ENCODE measurements at regions of chr16 and their contacts with region 1.

Region 1: DNA sequence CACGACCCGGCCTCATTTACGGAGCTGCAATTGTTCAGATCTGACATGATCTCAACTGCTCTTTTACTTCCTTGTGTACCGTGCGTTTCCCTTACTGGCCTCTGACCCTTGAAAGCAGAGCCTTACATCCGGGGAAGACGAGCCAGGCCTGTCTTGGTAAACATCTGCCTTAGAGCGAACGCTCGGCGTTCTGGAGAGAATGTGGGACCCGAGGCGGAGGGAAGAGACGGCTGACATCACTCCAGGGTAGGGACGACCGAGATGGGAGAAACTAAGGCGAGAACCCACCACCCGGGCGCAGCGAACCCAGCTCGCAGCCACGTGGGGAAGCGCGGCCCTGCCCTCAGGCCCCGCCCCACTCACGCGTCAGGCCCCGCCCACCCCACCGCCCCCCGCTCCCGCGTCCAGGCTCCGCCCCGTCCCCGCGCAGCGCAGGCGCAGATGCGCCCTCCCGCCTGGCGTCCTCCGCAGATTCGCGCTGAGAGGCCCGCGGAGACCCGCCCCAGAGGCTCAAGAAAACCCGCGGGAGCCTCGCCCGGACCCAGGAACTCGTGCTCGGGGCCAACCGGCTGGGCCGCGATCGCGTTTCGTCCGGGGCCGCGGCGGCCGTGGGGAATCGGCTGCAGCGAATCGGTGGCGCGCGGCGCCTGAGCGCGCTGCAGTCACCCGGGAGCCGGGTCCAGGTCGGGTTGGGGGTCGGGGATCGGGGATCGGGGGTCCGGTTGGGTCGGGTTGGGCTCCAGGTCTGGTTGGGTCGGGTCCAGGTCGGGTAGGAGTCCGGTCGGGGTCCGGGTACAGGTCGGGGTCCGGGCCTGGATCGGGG is at the start of gene TELO2:
- DNase-seq: peak; percentile 79 to 95 (median 88)
- ATAC-seq: peak; percentile 87
- H3K4me3 ChIP-seq: peak within 1 kb of the TSS; percentile 86
- H3K4me3 Mint-ChIP-seq: peak within 1 kb of the TSS; percentile 95
- H3K27ac ChIP-seq: peak within 1 kb of the TSS; percentile 84
- H3K27ac Mint-ChIP-seq: peak within 1 kb of the TSS; percentile 97
- H3K4me1 ChIP-seq: peaks cover 27% of the 10 kb centered on the region
- H3K4me1 Mint-ChIP-seq: peaks cover 10% of the 10 kb centered on the region
- H3K27me3 ChIP-seq: no peaks in the 10 kb centered on the region
- H3K27me3 Mint-ChIP-seq: no peaks in the 10 kb centered on the region
- CTCF ChIP-seq: peak; percentile 19
- total RNA-seq, gene TELO2: 29.7 to 30.8 TPM

Region 2: GRCh38 chr16:1408171-1408837 is 84.8 kb before region 1 on chr16:
- CTCF ChIA-PET with region 1: no interaction called
- POLR2A ChIA-PET with region 1: interaction called, 3 read pairs
- intact Hi-C with region 1: loop called in 1 of 2 experiments (anchors 5 kb)
- DNase-seq: peak; percentile 89 to 99 (median 96)
- ATAC-seq: peak; percentile 92
- H3K4me3 ChIP-seq: peak overlapping the region; percentile 51
- H3K4me3 Mint-ChIP-seq: peak overlapping the region; percentile 68
- H3K27ac ChIP-seq: peak overlapping the region in 1 of 2 donors; percentile 29
- H3K27ac Mint-ChIP-seq: peak overlapping the region; percentile 71
- H3K4me1 ChIP-seq: peaks cover 24% of the 10 kb centered on the region
- H3K4me1 Mint-ChIP-seq: peaks cover 34% of the 10 kb centered on the region
- H3K27me3 ChIP-seq: no peaks in the 10 kb centered on the region
- H3K27me3 Mint-ChIP-seq: no peaks in the 10 kb centered on the region
- CTCF ChIP-seq: no peak

Region 3: GRCh38 chr16:1474796-1475551 is 18.2 kb before region 1 on chr16 and contains the start of gene CLCN7:
- CTCF ChIA-PET with region 1: no interaction called
- POLR2A ChIA-PET with region 1: interaction called, 4 read pairs
- intact Hi-C with region 1: loop called (anchors 1 to 2 kb)
- DNase-seq: peak; percentile 70 to 94 (median 84)
- ATAC-seq: peak; percentile 87
- H3K4me3 ChIP-seq: peak within 1 kb of the TSS; percentile 62
- H3K4me3 Mint-ChIP-seq: peak within 1 kb of the TSS; percentile 88
- H3K27ac ChIP-seq: peak within 1 kb of the TSS; percentile 72 to 84
- H3K27ac Mint-ChIP-seq: peak within 1 kb of the TSS; percentile 89
- H3K4me1 ChIP-seq: peaks cover 41% of the 10 kb centered on the region
- H3K4me1 Mint-ChIP-seq: peaks cover 43% of the 10 kb centered on the region
- H3K27me3 ChIP-seq: no peaks in the 10 kb centered on the region
- H3K27me3 Mint-ChIP-seq: no peaks in the 10 kb centered on the region
- CTCF ChIP-seq: no peak
- total RNA-seq, gene CLCN7: 70.5 to 76.2 TPM

Region 4: DNA sequence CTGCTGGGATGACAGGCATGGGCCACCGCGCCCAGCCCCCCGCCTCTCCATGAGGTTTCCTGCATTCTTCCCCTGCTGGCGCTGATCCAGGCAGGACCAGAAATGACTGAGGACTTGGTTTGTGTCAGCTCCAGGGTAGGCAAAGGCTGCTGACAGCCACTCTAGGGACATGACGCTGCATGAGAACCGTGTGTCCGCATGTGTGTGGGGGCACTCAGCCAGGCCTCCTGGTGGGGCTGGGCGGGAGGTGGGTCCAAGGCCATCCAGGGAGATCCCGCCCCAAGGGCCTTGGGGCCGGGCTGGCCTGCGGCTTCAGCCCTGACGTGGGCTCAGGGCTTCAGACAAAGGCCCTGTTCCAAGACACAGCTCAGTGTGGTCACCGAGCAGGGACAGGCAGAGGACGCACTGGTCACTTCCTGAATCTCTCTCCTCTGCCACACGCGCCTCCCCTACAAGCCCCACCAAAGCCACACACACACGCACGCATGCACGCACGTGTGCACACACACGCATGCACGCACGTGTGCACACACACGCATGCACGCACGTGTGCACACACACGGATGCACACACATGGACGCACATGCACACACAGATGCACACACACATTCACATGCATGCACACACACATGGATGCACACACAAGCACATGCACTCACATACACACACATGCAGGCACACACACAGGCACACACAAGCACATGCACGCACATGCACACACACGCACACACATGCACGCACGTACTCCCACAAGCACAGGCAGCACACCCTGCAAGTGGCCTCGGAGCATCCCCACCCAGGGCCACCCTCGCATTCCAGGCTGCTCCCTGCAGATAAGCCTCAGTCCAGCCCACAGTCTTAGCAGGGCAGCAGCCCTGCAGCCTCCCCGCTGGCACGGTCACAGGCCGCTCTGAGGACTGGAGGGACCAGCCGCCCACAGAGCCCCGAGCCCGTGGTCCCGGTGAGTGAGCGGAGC is 35.0 kb after region 1 on chr16:
- CTCF ChIA-PET with region 1: no interaction called
- POLR2A ChIA-PET with region 1: interaction called, 27 read pairs
- intact Hi-C with region 1: loop called in 1 of 2 experiments (anchors 5 kb)
- DNase-seq: no peak
- ATAC-seq: no peak
- H3K4me3 ChIP-seq: no peak overlapping the region
- H3K4me3 Mint-ChIP-seq: no peak overlapping the region
- H3K27ac ChIP-seq: peak overlapping the region; percentile 48 to 71
- H3K27ac Mint-ChIP-seq: peak overlapping the region; percentile 80
- H3K4me1 ChIP-seq: peaks cover 67% of the 10 kb centered on the region
- H3K4me1 Mint-ChIP-seq: peaks cover 47% of the 10 kb centered on the region
- H3K27me3 ChIP-seq: no peaks in the 10 kb centered on the region
- H3K27me3 Mint-ChIP-seq: no peaks in the 10 kb centered on the region
- CTCF ChIP-seq: no peak

Region 5: DNA sequence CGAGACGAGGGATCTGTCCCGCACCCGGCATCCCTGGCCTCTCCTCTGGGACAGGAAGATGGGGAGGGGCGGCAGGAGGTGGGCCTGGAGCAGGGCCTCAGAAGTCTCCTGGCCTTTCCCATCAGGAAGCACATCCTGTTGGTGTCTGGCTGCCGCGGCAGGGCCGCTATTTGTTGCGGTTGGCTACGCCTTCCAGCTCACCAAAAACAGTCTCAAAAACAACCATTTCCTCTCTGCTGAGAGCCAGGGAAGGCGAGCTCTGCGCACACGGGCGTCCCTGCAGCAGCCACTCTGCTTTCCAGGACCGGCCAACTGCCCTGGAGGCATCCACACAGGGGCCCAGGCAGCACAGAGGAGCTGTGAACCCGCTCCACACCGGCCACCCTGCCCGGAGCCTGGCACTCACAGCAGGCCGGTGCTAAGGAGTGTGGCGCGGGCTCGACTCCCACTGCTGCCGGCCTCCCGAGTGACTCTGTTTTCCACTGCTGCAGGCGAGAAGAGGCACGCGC is 40.4 kb after region 1 on chr16 and contains the start of gene TMEM204:
- CTCF ChIA-PET with region 1: no interaction called
- POLR2A ChIA-PET with region 1: interaction called, 27 read pairs
- intact Hi-C with region 1: loop called (anchors 2 to 5 kb)
- DNase-seq: peak in 13 of 14 experiments; percentile 40 to 75 (median 58)
- ATAC-seq: peak; percentile 47
- H3K4me3 ChIP-seq: peak within 1 kb of the TSS; percentile 98
- H3K4me3 Mint-ChIP-seq: peak within 1 kb of the TSS; percentile 99
- H3K27ac ChIP-seq: peak within 1 kb of the TSS; percentile 55 to 56
- H3K27ac Mint-ChIP-seq: peak within 1 kb of the TSS; percentile 98
- H3K4me1 ChIP-seq: peaks cover 64% of the 10 kb centered on the region
- H3K4me1 Mint-ChIP-seq: peaks cover 59% of the 10 kb centered on the region
- H3K27me3 ChIP-seq: no peaks in the 10 kb centered on the region
- H3K27me3 Mint-ChIP-seq: no peaks in the 10 kb centered on the region
- CTCF ChIP-seq: no peak
- total RNA-seq, gene TMEM204: 20.5 to 22.1 TPM

Region 6: DNA sequence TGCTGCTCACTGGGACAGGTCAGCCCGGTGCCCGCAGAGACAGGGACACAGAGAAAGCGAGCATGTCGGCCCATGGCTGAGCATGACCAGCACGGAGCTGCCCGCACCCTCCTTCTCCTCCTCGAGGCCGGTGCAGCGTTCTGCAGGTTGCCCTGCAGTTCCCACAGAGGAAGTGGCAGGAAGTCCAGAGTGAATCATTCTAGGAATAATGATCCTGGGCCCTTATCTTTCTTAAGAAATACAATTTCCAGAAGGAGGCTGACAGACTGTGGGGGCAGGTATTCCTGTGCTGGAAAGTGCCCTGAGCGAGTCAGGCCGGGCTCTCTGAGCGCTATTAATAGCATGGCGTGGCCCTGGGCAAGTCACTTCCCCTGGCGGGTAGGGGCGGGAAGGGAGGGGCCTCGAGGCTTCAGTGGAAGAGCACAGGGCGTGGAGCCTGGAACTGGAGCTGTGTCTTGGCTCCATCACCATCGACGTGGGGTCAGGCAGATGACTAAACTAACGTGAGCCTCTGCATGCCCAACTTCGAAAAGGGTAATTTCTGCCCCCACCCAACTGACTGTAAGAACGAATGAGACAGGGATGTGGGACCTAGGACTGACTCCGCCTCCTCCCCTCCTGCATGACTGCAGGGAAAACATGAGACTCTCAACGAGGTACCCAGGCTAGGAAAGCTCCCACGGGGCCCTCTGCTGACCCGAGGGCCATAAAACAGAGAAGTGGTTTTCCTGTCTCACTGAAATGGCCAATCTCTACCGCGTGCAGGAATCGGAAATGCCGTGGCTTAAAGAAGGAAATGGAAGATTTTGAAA is 50.2 kb after region 1 on chr16:
- CTCF ChIA-PET with region 1: no interaction called
- POLR2A ChIA-PET with region 1: interaction called, 18 read pairs
- intact Hi-C with region 1: no loop called
- DNase-seq: peak in 9 of 14 experiments; percentile 24 to 76 (median 45)
- ATAC-seq: peak; percentile 66
- H3K4me3 ChIP-seq: peak overlapping the region; percentile 10
- H3K4me3 Mint-ChIP-seq: peak overlapping the region; percentile 54
- H3K27ac ChIP-seq: peak overlapping the region; percentile 56 to 58
- H3K27ac Mint-ChIP-seq: peak overlapping the region; percentile 80
- H3K4me1 ChIP-seq: peaks cover 99% of the 10 kb centered on the region
- H3K4me1 Mint-ChIP-seq: peaks cover 81% of the 10 kb centered on the region
- H3K27me3 ChIP-seq: no peaks in the 10 kb centered on the region
- H3K27me3 Mint-ChIP-seq: no peaks in the 10 kb centered on the region
- CTCF ChIP-seq: no peak

Region 7: DNA sequence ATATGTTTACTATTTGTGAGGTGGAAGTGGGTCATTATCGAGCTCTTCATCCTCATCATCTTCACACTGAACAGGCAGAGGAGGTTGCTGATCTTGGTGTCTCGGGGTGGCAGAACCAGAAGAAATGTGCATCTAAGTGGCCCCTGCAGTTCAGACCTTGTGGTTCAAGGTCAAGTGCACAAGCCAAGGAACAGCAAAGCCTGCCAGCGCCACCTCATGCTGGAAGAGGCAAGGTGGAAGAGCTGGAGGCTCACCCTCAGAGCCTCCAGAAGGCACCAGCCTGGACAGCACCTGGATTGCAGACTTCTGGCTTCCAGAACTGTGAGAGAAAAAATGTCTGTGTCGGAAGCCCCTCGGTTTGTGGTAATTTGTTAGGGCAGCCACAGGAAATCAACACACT is 86.1 kb after region 1 on chr16:
- CTCF ChIA-PET with region 1: no interaction called
- POLR2A ChIA-PET with region 1: no interaction called
- intact Hi-C with region 1: no loop called
- DNase-seq: peak in 4 of 14 experiments; percentile 23 to 47 (median 30)
- ATAC-seq: no peak
- H3K4me3 ChIP-seq: no peak overlapping the region
- H3K4me3 Mint-ChIP-seq: no peak overlapping the region
- H3K27ac ChIP-seq: no peak overlapping the region
- H3K27ac Mint-ChIP-seq: no peak overlapping the region
- H3K4me1 ChIP-seq: no peaks in the 10 kb centered on the region
- H3K4me1 Mint-ChIP-seq: no peaks in the 10 kb centered on the region
- H3K27me3 ChIP-seq: no peaks in the 10 kb centered on the region
- H3K27me3 Mint-ChIP-seq: no peaks in the 10 kb centered on the region
- CTCF ChIP-seq: no peak

Region 8: DNA sequence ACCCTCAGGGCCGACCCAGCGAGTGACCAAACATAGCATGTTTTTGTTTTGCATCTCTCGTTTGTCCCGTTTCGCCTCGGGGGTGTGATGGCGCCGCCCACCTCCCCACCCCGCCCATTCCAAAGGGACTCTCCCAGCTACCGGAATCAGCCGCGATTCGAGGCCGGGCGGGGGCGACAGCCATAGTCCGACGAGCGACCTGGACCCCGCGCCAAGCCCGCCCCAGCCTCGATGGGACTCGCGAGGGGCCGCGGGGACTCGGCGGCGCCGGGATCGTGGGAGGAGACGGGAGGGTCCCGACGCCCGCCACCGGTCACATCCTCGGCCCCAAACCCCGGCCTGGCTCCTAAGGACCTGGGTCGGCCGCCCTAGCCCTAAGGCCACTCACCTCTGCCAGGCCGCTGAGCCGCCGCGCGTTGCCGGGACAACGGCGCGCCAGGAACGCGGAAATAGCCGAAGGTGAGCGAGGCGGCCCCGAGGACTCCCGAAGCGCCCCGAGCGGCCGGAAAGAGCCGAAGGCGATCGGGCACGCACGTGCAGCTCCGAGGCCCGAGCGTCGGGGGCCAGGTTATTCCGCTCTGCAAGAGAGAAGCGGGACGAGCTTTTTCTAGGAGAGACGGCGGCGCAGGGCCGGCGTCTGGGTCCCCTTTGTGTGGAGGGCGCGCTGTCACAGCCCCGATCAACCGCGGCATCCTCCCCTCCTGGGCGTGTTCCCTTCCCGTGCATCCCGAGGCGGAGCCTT is 117.3 kb after region 1 on chr16:
- CTCF ChIA-PET with region 1: no interaction called
- POLR2A ChIA-PET with region 1: no interaction called
- intact Hi-C with region 1: loop called in 1 of 2 experiments (anchors 2 kb)
- DNase-seq: peak; percentile 85 to 96 (median 90)
- ATAC-seq: peak; percentile 65
- H3K4me3 ChIP-seq: peak overlapping the region; percentile 53
- H3K4me3 Mint-ChIP-seq: peak overlapping the region; percentile 72
- H3K27ac ChIP-seq: peak overlapping the region; percentile 45 to 46
- H3K27ac Mint-ChIP-seq: peak overlapping the region; percentile 89
- H3K4me1 ChIP-seq: peaks cover 44% of the 10 kb centered on the region
- H3K4me1 Mint-ChIP-seq: peaks cover 24% of the 10 kb centered on the region
- H3K27me3 ChIP-seq: peaks cover 6 to 10% of the 10 kb centered on the region in 2 experiments
- H3K27me3 Mint-ChIP-seq: peaks cover 14% of the 10 kb centered on the region
- CTCF ChIP-seq: no peak